GM18951 (cell line): ENCODE measurements at regions of chr5 and their contacts with region 1.

Region 1: GRCh38 chr5:150544611-150545219 is 36.8 kb downstream of the NDST1 start:
- POLR2A ChIP-seq: no peak

Region 2: GRCh38 chr5:150317048-150318003 is 227.4 kb before region 1 on chr5:
- in situ Hi-C with region 1: no loop called
- POLR2A ChIP-seq: no peak

Region 3: GRCh38 chr5:150449517-150450339 is 95.0 kb before region 1 on chr5 and contains the start of gene RPS14:
- in situ Hi-C with region 1: loop called (anchors 10 kb)
- POLR2A ChIP-seq: peak; percentile 97

Region 4: GRCh38 chr5:150700594-150701293 is 156.0 kb after region 1 on chr5 and contains the start of gene RBM22:
- in situ Hi-C with region 1: no loop called
- POLR2A ChIP-seq: peak; percentile 87